ENCODE measurements at regions of chr3 and their contacts with region 1.

Region 1: DNA sequence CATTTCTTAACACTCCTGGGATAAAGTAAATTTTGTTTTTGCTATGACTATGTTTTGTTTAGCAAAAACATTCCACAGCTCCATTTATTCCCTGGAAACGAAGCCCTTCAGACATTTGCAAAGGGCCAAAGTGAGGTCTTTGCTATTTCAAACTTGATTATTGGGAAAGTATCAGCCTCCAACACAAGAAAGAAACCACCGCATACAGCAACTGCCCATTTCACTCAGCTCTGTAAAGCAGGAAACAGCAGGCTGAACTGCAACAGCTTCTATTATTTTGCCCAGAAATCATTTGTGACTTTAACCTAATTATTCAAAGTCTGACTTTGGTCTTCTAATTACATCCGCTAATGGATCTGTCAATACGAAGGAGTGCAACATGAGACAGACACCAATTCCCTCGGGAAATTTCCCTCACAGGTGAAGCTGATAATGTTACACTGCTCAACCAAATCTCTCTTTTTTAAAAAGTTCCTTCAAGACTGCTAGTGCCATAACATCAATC is 72.1 kb downstream of the RFTN1 start:
- DNase-seq: peak; percentile 54
- H3K4me3 ChIP-seq: no peak overlapping the region
- CTCF ChIP-seq: no peak

Region 2: DNA sequence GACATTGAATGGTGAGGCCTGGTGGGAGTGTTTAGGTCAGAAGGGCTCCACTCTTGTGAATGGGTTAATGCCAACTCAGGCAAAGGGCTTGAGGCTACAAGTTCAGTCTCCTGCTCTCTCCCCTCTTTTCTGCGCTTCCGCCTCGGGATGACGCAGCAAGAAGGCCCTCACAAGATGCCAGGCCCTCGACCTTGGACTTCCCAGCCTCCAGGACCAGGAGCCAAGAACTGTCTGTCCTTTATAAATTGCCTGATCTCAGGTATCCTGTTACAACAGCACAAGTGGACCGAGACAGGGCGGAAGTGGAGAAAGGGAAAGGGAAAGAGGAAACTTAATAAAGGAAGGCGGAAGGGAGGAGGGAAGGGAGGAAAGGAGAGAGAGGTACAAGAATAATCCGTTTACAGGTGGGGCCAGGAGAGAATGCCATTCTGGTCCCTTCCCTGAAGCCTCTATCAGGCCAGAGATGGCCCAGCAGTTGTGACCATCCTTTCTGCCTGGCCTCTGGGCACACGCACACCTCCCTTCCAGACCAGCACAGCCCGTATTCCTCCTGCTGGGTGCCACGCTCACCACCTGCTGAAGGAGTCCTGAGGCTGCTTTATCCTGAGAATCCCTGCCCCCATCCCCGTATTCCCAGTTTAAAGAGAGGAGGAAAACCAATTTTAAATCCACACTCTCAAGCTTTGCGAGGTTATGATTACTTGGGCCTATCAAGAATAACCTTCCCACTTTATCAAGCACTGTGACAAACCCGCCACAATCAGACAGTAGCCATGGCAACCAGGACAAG is 112.2 kb before region 1 on chr3:
- in situ Hi-C with region 1: loop called (anchors 5 kb)
- DNase-seq: no peak
- H3K4me3 ChIP-seq: no peak overlapping the region
- CTCF ChIP-seq: no peak

Region 3: GRCh38 chr3:16482770-16483531 is 41.5 kb after region 1 on chr3:
- in situ Hi-C with region 1: loop called (anchors 5 kb)
- DNase-seq: no peak
- H3K4me3 ChIP-seq: no peak overlapping the region
- CTCF ChIP-seq: no peak

Measured in astrocyte of the cerebellum (primary cell).